ENCODE measurements at regions of chr17 and their contacts with region 1.

Region 1: GRCh38 chr17:409848-410545 is 57.4 kb upstream of the RPH3AL start:
- DNase-seq: peak; percentile 97
- H3K4me3 ChIP-seq: peak overlapping the region; percentile 63
- H3K27me3 ChIP-seq: no peaks in the 10 kb centered on the region
- CTCF ChIP-seq: no peak

Region 2: DNA sequence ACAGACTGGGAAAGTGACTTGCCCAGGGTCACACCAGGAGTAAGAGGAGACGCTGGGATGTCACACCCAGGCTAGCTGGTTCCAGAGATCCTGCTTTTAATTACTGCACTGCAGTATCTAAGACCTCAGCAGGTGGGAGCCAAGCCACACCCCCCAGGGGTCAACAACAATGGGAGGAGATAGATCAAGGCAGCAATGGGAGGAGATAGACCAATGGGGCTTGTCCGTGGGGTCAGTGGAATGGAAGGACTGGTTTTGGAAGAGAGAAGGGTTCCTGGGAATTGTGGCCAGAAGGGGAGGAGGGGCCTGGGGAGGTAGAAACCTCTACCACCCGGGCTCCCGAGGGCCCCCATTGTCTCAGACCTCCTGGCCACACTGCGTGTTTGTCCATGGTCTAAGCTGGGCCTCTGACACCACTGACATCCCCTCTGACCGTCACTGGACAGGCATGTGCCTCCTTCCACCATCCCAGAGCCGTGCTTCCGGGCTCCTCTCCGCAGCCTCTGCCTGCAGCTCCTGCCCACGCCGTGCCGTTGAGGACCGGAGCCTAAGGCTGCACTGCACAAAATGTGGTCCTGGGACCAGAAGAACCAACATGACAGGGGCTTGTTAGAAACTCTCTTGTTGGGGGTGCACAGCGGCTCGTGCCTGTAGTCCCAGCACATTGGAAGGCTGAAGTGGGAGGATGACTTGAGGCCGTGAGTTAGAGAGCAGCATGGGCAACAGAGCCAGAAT is 12.4 kb after region 1 on chr17:
- CTCF ChIA-PET with region 1: interaction called, 22 read pairs
- POLR2A ChIA-PET with region 1: no interaction called
- DNase-seq: no peak
- H3K4me3 ChIP-seq: no peak overlapping the region
- H3K27me3 ChIP-seq: no peaks in the 10 kb centered on the region
- CTCF ChIP-seq: no peak

Region 3: GRCh38 chr17:511001-511698 is 101.2 kb after region 1 on chr17:
- CTCF ChIA-PET with region 1: interaction called, 10 read pairs
- POLR2A ChIA-PET with region 1: no interaction called
- DNase-seq: peak; percentile 80
- H3K4me3 ChIP-seq: peak overlapping the region; percentile 2; the same call in 1 of the 2 replicates
- H3K27me3 ChIP-seq: no peaks in the 10 kb centered on the region
- CTCF ChIP-seq: 0 out of 2 replicates have a peak, but pooled peaks have one; percentile 12

Region 4: DNA sequence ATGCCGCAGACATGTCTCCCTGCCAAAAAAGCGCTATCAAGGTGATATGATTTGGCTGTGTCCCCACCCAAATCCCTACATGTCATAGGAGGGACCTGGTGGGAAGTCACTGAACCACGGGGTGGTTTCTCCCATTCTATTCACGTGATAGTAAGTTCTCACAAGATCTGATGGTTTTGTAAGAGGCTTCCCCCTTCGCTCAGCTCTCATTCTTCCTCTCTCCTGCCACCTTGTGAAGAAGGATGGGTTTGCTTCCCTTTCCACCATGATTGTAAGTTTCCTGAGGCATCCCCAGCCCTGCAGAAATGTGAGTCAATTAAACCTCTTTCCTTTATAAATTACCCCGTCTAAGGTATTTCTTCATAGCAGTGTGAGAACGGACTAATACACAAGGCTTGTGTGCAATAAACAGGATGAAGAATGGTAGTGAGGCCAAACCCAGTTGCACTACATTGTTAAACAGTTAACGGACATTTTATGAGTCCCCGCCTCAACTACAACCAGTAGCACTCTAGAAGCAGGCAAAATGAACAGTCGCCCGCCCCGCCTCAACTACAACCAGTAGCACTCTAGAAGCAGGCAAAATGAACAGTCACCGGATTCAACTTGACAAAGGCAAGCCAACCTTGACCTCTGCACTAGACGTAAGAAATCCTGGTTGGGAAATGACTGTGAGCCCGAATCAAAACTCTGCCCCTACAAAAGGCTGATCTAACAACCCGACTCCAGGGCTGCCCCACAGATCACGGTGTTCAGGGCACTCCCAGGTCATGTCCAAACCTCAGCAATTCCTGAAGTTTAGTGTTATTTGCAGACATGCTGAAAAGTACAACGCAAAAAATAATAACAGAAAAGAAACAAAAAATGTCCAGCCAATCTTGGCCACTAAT is 278.3 kb after region 1 on chr17:
- CTCF ChIA-PET with region 1: interaction called, 230 read pairs
- POLR2A ChIA-PET with region 1: no interaction called
- DNase-seq: no peak
- H3K4me3 ChIP-seq: no peak overlapping the region
- H3K27me3 ChIP-seq: no peaks in the 10 kb centered on the region
- CTCF ChIP-seq: peak; percentile 31; the same call in 1 of the 2 replicates

Region 5: DNA sequence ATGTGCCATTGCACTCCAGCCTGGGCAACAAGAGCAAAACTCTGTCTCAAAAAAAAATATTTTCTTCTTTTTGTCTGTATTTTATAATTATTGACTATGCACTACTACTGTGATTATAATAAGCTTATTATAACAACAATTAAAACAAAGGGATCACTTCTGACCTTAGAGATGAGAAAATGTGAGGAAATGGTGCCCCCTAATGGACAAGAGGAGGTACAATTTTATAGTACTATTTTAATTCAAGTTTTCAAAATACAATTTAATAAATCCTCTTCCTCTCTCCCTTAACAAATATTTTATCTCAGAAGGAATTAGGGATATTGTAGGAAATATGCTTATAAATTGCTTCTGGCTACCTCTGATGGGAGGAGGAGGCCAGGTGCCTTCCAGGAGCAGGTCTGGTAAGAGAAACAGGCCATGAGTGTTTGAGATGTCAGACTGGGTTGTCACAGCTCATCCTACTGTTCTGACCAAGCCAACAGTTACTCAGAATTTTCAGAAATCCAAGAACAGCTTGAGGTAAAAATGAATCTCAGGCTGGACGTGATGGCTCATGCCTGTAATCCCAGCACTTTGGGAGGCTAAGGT is 290.6 kb after region 1 on chr17:
- CTCF ChIA-PET with region 1: interaction called, 230 read pairs
- POLR2A ChIA-PET with region 1: interaction called, 3 read pairs
- DNase-seq: no peak
- H3K4me3 ChIP-seq: no peak overlapping the region
- H3K27me3 ChIP-seq: no peaks in the 10 kb centered on the region
- CTCF ChIP-seq: peak; percentile 43

Region 6: GRCh38 chr17:705863-706262 is 295.9 kb after region 1 on chr17:
- CTCF ChIA-PET with region 1: interaction called, 230 read pairs
- POLR2A ChIA-PET with region 1: interaction called, 3 read pairs
- DNase-seq: no peak
- H3K4me3 ChIP-seq: no peak overlapping the region
- H3K27me3 ChIP-seq: no peaks in the 10 kb centered on the region
- CTCF ChIP-seq: no peak

Region 7: GRCh38 chr17:716238-716637 is 306.2 kb after region 1 on chr17:
- CTCF ChIA-PET with region 1: interaction called, 13 read pairs
- POLR2A ChIA-PET with region 1: no interaction called
- DNase-seq: no peak
- H3K4me3 ChIP-seq: no peak overlapping the region
- H3K27me3 ChIP-seq: no peaks in the 10 kb centered on the region
- CTCF ChIP-seq: no peak